HepG2 (cell line): ENCODE measurements at regions of chr22 and their contacts with region 1.

Region 1: DNA sequence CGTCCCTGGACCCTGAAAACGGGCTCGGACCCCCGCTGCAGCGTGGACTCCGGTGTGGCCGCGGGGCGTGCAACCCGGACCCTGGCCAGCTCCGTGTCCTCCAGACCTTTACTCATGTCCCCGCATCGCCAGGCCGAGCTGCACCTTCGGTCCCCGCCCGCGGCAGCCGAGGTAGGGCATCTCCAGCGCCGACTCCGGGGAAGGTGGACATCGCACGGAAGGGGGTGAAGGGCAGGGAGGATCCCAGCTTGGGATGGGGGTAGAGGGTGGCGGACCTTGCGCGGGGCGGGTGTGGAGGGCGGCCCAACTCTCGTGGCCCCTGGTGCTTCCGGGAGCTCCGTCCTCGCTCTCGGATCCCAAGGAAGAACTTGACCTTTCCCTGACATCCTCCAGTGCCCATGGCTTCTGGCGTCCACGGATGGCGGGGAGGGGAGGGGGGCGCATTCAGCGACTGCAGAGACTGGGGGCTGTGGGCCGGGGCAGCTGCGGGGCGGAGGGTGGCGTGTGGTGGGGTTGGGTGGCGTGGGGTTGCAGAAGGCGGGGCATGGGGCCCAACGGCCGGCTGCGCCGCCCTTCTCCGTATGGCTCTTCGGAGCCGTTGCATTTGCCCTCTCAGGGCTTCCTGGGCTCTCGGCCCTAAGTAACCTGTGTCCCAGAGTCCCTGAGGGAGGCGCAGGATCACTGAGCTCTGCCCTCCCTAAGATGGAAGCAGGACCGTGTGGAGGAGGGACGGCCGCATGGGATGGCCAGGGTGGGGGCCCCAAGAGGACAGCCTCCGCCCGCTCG is 9.5 kb upstream of the AIFM3 start:
- DNase-seq: no peak
- ATAC-seq: peak; percentile 65
- H3K4me3 ChIP-seq: peak overlapping the region; percentile 87 to 97 (median 95)
- H3K27ac ChIP-seq: peak overlapping the region; percentile 56
- H3K4me1 ChIP-seq: peaks cover 62% of the 10 kb centered on the region
- H3K27me3 ChIP-seq: no peaks in the 10 kb centered on the region; a peak in 1 of 5 replicates
- CTCF ChIP-seq: peak; percentile 19; the same call in 1 of the 2 replicates
- EP300 ChIP-seq: no peak
- POLR2A ChIP-seq: peak in 1 of 2 experiments; percentile 51; a peak in 2 of 4 replicates
- RAD21 ChIP-seq: peak; percentile 22; the same call in 1 of the 2 replicates

Region 2: GRCh38 chr22:20777420-20778177 is 179.9 kb before region 1 on chr22:
- CTCF ChIA-PET with region 1: no interaction called
- POLR2A ChIA-PET with region 1: interaction called, 9 read pairs
- in situ Hi-C with region 1: no loop called
- intact Hi-C with region 1: loop called (anchors 10 kb)
- DNase-seq: peak; percentile 99
- ATAC-seq: peak; percentile 76
- H3K4me3 ChIP-seq: peak overlapping the region in 1 of 3 experiments; percentile 70; a peak in 1 of 6 replicates
- H3K27ac ChIP-seq: peak overlapping the region; percentile 90
- H3K4me1 ChIP-seq: peaks cover 85% of the 10 kb centered on the region
- H3K27me3 ChIP-seq: no peaks in the 10 kb centered on the region
- CTCF ChIP-seq: peak; percentile 75
- EP300 ChIP-seq: peak; percentile 61 to 94; a peak in 3 of 4 replicates
- POLR2A ChIP-seq: peak; percentile 38 to 76; a peak in 3 of 4 replicates
- RAD21 ChIP-seq: peak; percentile 57; the same call in 1 of the 2 replicates

Region 3: GRCh38 chr22:20916983-20917810 is 40.3 kb before region 1 on chr22 and contains the start of gene CRKL:
- CTCF ChIA-PET with region 1: no interaction called
- POLR2A ChIA-PET with region 1: interaction called, 14 read pairs
- in situ Hi-C with region 1: loop called (anchors 5 kb)
- intact Hi-C with region 1: loop called (anchors 1 kb)
- DNase-seq: peak; percentile 94
- ATAC-seq: peak; percentile 97
- H3K4me3 ChIP-seq: peak within 1 kb of the TSS; percentile 96 to 99 (median 98)
- H3K27ac ChIP-seq: peak within 1 kb of the TSS; percentile 89
- H3K4me1 ChIP-seq: peaks cover 48% of the 10 kb centered on the region
- H3K27me3 ChIP-seq: no peaks in the 10 kb centered on the region; a peak in 1 of 5 replicates
- CTCF ChIP-seq: peak; percentile 96
- EP300 ChIP-seq: 0 out of 4 replicates have a peak, but pooled peaks of 1 of the 2 experiments have one; percentile 12
- POLR2A ChIP-seq: peak; percentile 74
- RAD21 ChIP-seq: peak; percentile 87
- total RNA-seq, gene CRKL: 60.6 and 75.5 TPM in 2 replicates

Region 4: GRCh38 chr22:20989323-20990138 is 32.0 kb after region 1 on chr22:
- CTCF ChIA-PET with region 1: no interaction called
- POLR2A ChIA-PET with region 1: no interaction called
- in situ Hi-C with region 1: no loop called
- intact Hi-C with region 1: no loop called
- DNase-seq: no peak
- ATAC-seq: no peak
- H3K4me3 ChIP-seq: no peak overlapping the region
- H3K27ac ChIP-seq: no peak overlapping the region
- H3K4me1 ChIP-seq: no peaks in the 10 kb centered on the region
- H3K27me3 ChIP-seq: no peaks in the 10 kb centered on the region
- CTCF ChIP-seq: no peak
- EP300 ChIP-seq: no peak
- POLR2A ChIP-seq: no peak
- RAD21 ChIP-seq: no peak